ENCODE measurements at regions of chr11 and their contacts with region 1.

Region 1: DNA sequence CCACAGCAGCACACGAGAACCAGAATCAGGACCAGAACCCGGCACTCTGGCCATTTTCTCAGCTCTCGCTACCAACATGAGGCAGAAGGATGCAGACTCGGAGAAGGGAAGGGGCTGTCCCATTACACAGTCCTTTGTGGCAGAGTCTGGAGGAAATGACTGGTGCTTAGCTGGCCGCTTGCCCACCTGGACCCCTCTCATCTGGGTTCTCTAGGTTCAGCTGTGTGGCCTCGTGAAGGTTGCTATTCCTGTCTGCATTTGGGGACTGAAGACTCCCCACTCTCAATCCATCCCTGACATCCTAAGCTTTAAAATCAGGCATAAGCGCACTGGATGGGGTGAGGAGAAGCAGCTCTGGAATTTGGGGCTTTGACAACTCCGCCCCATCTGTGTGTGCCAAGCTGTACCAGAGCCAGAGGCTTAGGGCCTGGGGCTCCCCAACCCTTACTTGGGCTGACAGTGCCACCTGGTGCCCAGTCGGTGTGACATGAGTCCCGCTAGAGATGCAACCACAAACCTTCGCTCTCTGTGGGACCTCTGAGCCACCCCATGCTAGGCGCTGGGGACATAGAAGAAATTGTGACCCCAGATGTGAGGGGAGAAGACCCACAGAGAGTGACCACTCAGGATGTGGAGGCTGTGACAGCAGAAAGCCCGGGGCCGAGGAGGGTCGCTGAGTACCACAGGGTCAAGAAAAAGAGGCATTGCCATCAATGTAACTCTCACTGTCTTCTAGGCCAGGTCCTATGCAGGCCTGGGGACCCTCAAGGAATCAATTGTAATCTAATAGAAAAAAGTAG is 35.9 kb upstream of the FCHSD2 start:
- DNase-seq: peak; percentile 60 to 81
- H3K4me3 ChIP-seq: no peak overlapping the region
- H3K27ac ChIP-seq: no peak overlapping the region
- H3K4me1 ChIP-seq: no peaks in the 10 kb centered on the region
- H3K27me3 ChIP-seq: no peaks in the 10 kb centered on the region
- CTCF ChIP-seq: peak; percentile 90 to 93 (median 91)
- EP300 ChIP-seq: no peak
- POLR2A ChIP-seq: no peak
- RAD21 ChIP-seq: peak; percentile 99 to 100

Region 2: GRCh38 chr11:72831513-72832300 is 346.3 kb before region 1 on chr11:
- CTCF ChIA-PET with region 1: interaction called, 258 read pairs
- POLR2A ChIA-PET with region 1: interaction called, 3 read pairs
- DNase-seq: peak; percentile 58 to 90
- H3K4me3 ChIP-seq: no peak overlapping the region
- H3K27ac ChIP-seq: no peak overlapping the region
- H3K4me1 ChIP-seq: peaks cover 0 to 5% (median 4%) of the 10 kb centered on the region in 4 experiments; a peak in 6 of 7 replicates
- H3K27me3 ChIP-seq: no peaks in the 10 kb centered on the region; a peak in 1 of 7 replicates
- CTCF ChIP-seq: peak; percentile 94 to 99 (median 96)
- EP300 ChIP-seq: no peak
- POLR2A ChIP-seq: no peak
- RAD21 ChIP-seq: peak; percentile 99

Region 3: DNA sequence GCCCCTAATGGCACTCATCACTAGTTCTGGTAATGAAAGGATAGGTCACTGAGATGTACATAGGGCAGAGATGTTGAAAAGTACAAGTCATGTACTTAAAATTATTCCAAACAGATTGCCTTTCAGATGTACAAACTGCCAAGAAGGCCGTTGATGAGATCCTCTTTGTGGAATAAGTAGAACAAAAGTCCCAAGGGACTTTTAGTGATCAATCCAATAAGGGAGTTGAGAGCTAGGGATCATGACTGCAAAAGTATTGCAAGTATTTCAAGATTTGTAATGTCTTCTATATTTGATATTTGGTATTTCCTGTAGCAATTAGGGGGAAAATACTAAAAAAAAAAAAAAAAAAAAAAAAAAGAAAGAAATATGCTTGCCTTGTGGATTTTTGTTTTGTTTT is 281.5 kb before region 1 on chr11:
- CTCF ChIA-PET with region 1: interaction called, 10 read pairs
- POLR2A ChIA-PET with region 1: no interaction called
- DNase-seq: no peak
- H3K4me3 ChIP-seq: no peak overlapping the region
- H3K27ac ChIP-seq: no peak overlapping the region
- H3K4me1 ChIP-seq: no peaks in the 10 kb centered on the region
- H3K27me3 ChIP-seq: no peaks in the 10 kb centered on the region
- CTCF ChIP-seq: no peak
- EP300 ChIP-seq: no peak
- POLR2A ChIP-seq: no peak
- RAD21 ChIP-seq: no peak

Region 4: GRCh38 chr11:73047773-73048371 is 130.1 kb before region 1 on chr11:
- CTCF ChIA-PET with region 1: no interaction called
- POLR2A ChIA-PET with region 1: no interaction called
- DNase-seq: no peak
- H3K4me3 ChIP-seq: no peak overlapping the region
- H3K27ac ChIP-seq: no peak overlapping the region
- H3K4me1 ChIP-seq: no peaks in the 10 kb centered on the region
- H3K27me3 ChIP-seq: no peaks in the 10 kb centered on the region
- CTCF ChIP-seq: no peak
- EP300 ChIP-seq: no peak
- POLR2A ChIP-seq: no peak
- RAD21 ChIP-seq: no peak

Region 5: DNA sequence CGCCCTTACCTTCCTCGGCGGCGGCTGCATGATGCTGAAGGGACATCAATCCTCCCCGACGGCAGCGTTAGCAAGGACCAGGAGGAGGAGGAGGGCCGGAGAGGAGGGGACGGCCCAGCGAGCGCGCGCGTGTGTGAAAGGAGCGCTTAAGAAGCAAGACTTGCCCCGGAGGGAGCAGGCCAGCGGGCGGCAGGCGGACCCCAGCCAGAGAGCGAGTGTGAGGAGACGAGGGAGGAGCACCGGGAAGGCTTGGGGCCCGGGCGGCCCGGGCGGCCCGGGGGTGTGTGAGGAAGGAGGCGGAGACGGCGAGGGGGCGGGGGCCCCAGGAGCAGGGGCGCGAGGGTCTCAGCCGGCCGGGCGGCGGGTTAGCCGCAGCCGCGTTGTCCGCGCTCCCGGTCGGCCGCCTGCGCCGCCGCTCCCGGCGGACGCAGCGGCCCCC is 36.1 kb before region 1 on chr11:
- CTCF ChIA-PET with region 1: interaction called, 27 read pairs
- POLR2A ChIA-PET with region 1: no interaction called
- DNase-seq: peak in 1 of 2 experiments; percentile 84
- H3K4me3 ChIP-seq: peak overlapping the region; percentile 69 to 80 (median 78)
- H3K27ac ChIP-seq: peak overlapping the region; percentile 90; the same call in 1 of the 2 replicates
- H3K4me1 ChIP-seq: peaks cover 2 to 10% (median 8%) of the 10 kb centered on the region in 4 experiments; a peak in 6 of 7 replicates
- H3K27me3 ChIP-seq: peaks cover 0 to 12% (median 6%) of the 10 kb centered on the region in 4 experiments; a peak in 3 of 7 replicates
- CTCF ChIP-seq: no peak
- EP300 ChIP-seq: no peak
- POLR2A ChIP-seq: no peak
- RAD21 ChIP-seq: no peak

Region 6: GRCh38 chr11:73157053-73158010 is 20.6 kb before region 1 on chr11:
- CTCF ChIA-PET with region 1: interaction called, 112 read pairs
- POLR2A ChIA-PET with region 1: no interaction called
- DNase-seq: no peak
- H3K4me3 ChIP-seq: no peak overlapping the region
- H3K27ac ChIP-seq: no peak overlapping the region
- H3K4me1 ChIP-seq: peaks cover 4 to 12% (median 7%) of the 10 kb centered on the region in 4 experiments; a peak in 6 of 7 replicates
- H3K27me3 ChIP-seq: no peaks in the 10 kb centered on the region; a peak in 2 of 7 replicates
- CTCF ChIP-seq: no peak
- EP300 ChIP-seq: no peak
- POLR2A ChIP-seq: no peak
- RAD21 ChIP-seq: no peak

Region 7: DNA sequence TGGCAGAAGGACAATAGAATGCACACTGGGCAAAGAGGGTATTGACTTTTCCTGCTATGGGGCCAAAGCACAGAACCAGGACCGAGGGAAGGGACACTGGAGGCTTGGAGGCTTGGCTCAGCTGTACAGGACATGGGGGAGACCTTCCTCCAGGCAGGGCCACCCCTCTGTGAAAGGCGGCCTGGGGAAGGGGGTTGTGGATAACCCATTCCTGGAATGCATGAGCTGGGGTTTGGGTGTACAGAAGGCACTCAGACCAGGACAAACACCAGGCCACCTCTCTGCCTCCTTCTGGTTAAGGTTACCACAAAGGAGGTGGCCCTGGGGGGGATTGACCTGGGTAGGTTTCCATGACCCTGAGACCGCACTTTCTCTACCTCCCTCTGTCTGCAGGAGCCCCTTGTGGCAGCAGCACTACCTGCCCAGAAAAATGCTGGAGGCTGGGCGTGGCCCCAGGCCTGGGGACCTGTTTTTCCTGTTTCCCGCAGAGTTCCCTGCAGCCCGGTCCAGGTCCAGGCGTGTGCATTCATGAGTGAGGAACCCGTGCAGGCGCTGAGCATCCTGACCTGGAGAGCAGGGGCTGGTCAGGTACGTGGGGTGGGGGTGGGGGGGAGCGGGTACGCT is 49.7 kb after region 1 on chr11:
- CTCF ChIA-PET with region 1: interaction called, 451 read pairs
- POLR2A ChIA-PET with region 1: no interaction called
- DNase-seq: peak in 1 of 2 experiments; percentile 87
- H3K4me3 ChIP-seq: peak overlapping the region in 1 of 4 experiments; percentile 25; a peak in 2 of 8 replicates
- H3K27ac ChIP-seq: no peak overlapping the region
- H3K4me1 ChIP-seq: peaks cover 3 to 15% (median 13%) of the 10 kb centered on the region in 4 experiments
- H3K27me3 ChIP-seq: no peaks in the 10 kb centered on the region; a peak in 2 of 7 replicates
- CTCF ChIP-seq: peak; percentile 50 to 67 (median 62)
- EP300 ChIP-seq: no peak
- POLR2A ChIP-seq: 0 out of 3 replicates have a peak, but pooled peaks of 1 of the 2 experiments have one; percentile 38
- RAD21 ChIP-seq: peak; percentile 32 to 51; a peak in 3 of 4 replicates

Region 8: DNA sequence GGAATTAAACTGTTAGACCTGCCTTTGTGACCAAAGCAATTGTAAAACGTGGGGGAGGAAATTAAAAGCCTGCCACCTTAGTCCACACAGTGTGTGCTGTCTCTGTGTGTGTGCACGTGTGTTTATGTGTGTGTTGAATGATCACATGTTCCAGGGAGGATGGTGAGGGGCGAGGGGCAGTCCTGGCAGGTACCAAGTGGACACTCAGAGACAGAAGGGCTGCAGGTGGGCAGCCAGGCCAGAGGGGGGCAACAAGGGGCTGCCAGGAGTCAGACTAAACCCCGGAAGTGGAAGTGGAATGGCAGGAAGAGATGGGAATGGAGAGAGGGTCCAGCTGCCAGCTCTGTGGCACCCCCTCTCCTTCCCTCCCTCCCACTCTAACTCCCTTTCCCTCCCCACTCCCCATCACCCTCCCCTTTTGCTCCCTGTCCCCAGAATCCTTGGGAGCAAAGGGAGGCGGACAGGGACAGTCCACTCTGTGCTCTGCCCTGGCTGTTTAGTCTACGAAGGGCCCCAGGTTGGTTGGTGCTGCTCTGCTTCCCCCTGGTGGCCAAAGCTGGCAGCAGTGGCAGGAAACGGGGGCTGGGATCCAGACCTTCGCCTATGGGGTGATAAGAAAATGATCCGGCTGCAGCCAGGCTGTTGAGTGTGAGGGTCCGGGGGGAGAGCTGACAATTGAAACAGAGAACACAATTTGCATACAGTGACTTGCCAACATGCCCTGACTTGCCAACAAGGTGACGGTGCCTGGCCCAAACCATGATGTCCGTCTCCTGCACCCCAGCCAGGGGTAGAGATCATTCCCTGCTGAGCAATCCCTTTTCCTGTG is 64.5 kb after region 1 on chr11:
- CTCF ChIA-PET with region 1: interaction called, 451 read pairs
- POLR2A ChIA-PET with region 1: no interaction called
- DNase-seq: peak in 1 of 2 experiments; percentile 97
- H3K4me3 ChIP-seq: peak overlapping the region; percentile 14 to 58 (median 22); a peak in 5 of 8 replicates
- H3K27ac ChIP-seq: peak overlapping the region; percentile 13; the same call in 1 of the 2 replicates
- H3K4me1 ChIP-seq: peaks cover 0 to 8% (median 3%) of the 10 kb centered on the region in 4 experiments; a peak in 3 of 7 replicates
- H3K27me3 ChIP-seq: no peaks in the 10 kb centered on the region
- CTCF ChIP-seq: peak; percentile 92 to 96 (median 93)
- EP300 ChIP-seq: no peak
- POLR2A ChIP-seq: peak in 1 of 2 experiments; percentile 75; a peak in 1 of 3 replicates
- RAD21 ChIP-seq: peak; percentile 80 to 85